H1 (cell line): ENCODE measurements at regions of chrX and their contacts with region 1.

Region 1: DNA sequence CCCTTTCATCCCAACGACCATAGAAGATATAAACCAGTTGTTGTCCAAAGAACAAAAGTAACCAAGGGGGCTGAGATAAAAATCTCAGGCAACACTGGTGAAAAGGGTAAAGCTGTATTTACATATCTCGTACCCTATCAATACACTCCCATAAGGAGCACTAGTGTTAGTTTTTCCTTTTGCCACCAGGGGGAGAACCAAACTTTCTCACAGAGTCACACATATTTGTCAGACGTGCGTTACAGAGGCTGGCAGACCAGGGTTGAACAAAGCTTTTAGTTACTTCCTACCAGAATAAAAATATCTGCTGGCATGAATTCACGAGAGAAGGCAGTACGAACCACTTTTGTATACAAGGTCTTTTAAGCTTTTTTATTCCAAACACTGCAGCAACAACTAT is 88.3 kb downstream of the AMELX start:
- DNase-seq: no peak
- H3K4me3 ChIP-seq: no peak overlapping the region
- H3K27ac ChIP-seq: no peak overlapping the region
- H3K4me1 ChIP-seq: no peaks in the 10 kb centered on the region
- H3K27me3 ChIP-seq: no peaks in the 10 kb centered on the region
- CTCF ChIP-seq: peak in 2 of 3 experiments; percentile 37 to 53; a peak in 3 of 4 replicates
- EP300 ChIP-seq: no peak
- POLR2A ChIP-seq: no peak
- RAD21 ChIP-seq: peak; percentile 34 to 52; a peak in 3 of 4 replicates

Region 2: DNA sequence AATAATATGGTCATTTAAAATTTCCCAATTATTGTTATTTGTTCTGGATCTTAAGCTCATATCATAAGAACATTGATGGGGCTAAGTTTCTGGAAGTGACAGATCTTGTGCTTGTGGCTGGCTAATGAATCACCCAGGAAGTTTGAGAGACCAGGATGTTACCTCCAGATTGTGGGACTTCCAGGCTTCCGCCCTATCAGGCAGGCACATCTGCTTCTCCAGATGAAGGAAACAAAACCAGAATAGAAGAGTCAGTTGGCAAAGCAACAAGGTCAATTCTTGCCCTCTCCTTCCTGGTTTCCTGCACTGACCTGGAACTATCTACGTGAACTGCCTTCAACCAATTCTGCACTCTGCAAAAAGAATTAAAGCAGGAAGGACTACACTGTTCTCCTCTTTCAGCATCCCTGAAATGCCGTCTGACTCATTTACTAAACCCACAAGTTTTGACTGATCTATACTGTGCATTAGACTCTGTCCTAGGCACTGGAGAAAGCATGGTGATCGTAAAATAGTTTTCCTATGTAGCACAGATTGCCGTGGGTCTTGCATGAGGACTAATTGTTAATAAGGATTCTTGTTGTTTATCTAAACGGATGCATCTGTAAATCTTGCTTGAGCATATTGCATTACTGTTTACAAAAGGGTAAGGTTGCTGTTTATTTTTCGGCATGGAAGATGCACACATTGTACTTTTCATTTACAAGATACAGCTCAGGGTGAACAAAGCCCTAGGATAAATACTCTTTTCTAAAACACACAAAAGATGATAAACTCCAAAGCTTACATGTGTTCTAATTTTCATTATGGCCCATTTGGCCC is 13.6 kb before region 1 on chrX:
- CTCF ChIA-PET with region 1: interaction called, 11 read pairs
- POLR2A ChIA-PET with region 1: no interaction called
- DNase-seq: no peak
- H3K4me3 ChIP-seq: no peak overlapping the region
- H3K27ac ChIP-seq: no peak overlapping the region
- H3K4me1 ChIP-seq: no peaks in the 10 kb centered on the region
- H3K27me3 ChIP-seq: no peaks in the 10 kb centered on the region
- CTCF ChIP-seq: no peak
- EP300 ChIP-seq: no peak
- POLR2A ChIP-seq: no peak
- RAD21 ChIP-seq: no peak

Region 3: GRCh38 chrX:11406109-11406765 is 24.8 kb after region 1 on chrX:
- CTCF ChIA-PET with region 1: interaction called, 10 read pairs
- POLR2A ChIA-PET with region 1: no interaction called
- DNase-seq: no peak
- H3K4me3 ChIP-seq: no peak overlapping the region
- H3K27ac ChIP-seq: no peak overlapping the region
- H3K4me1 ChIP-seq: no peaks in the 10 kb centered on the region
- H3K27me3 ChIP-seq: no peaks in the 10 kb centered on the region
- CTCF ChIP-seq: no peak
- EP300 ChIP-seq: no peak
- POLR2A ChIP-seq: no peak
- RAD21 ChIP-seq: no peak

Region 4: DNA sequence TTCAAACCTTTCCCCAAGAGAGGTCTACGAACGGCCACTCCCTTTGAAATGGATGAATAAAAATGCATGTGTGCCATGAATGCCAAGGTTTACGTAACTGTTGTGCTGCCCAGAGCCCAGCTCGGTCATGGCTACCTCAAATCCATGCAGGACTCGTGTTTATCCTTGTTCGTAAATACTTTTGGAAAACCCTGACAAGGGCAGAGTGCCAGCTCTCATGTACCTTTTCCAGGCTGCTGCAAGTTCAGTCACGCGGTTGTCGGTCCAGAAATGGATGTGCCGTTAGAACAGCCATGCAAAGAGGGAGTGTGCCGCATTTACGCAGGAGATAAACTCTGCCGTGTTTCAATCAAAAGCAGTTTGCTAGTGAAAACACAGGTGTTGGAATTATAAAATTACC is 35.1 kb after region 1 on chrX:
- CTCF ChIA-PET with region 1: no interaction called
- POLR2A ChIA-PET with region 1: no interaction called
- DNase-seq: no peak
- H3K4me3 ChIP-seq: no peak overlapping the region
- H3K27ac ChIP-seq: no peak overlapping the region
- H3K4me1 ChIP-seq: no peaks in the 10 kb centered on the region
- H3K27me3 ChIP-seq: no peaks in the 10 kb centered on the region
- CTCF ChIP-seq: no peak
- EP300 ChIP-seq: no peak
- POLR2A ChIP-seq: no peak
- RAD21 ChIP-seq: no peak